Heart left ventricle (tissue), 16 donors: ENCODE measurements at regions of chr10 and their contacts with region 1.

Region 1: DNA sequence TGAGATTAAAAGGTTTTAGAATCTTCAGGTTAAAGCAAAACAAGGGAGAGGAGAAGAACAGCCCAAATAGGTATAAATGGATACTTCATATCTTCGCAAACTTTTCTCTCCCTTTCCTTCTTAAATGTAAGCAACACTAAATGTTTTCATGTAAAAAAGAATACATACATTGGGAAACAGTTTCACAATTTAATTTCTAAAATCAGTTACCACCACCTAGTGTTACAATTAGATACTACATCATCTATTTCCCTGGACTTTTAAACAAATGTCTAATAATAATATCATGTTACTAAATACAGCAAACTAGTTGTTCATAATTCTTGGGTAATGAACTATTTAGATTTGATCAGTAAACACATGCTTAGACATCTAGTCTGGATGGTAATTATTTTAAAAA is 35.8 kb downstream of the MINDY3 start:
- DNase-seq: no peak
- ATAC-seq: no peak
- H3K4me3 ChIP-seq: no peak overlapping the region
- H3K27ac ChIP-seq: no peak overlapping the region
- H3K4me1 ChIP-seq: peaks cover 0 to 9% (median 0%) of the 10 kb centered on the region in 12 donors
- H3K27me3 ChIP-seq: no peaks in the 10 kb centered on the region
- CTCF ChIP-seq: peak; percentile 31 to 72 (median 53)
- POLR2A ChIP-seq: no peak

Region 2: GRCh38 chr10:15439341-15439842 is 385.1 kb before region 1 on chr10:
- intact Hi-C with region 1: loop called in 9 of 10 experiments (anchors 2 to 10 kb)
- DNase-seq: peak; percentile 53 to 71 (median 59)
- ATAC-seq: peak; percentile 75 to 97 (median 92)
- H3K4me3 ChIP-seq: peak overlapping the region in 10 of 12 donors; percentile 21 to 51 (median 36)
- H3K27ac ChIP-seq: peak overlapping the region; percentile 26 to 80 (median 60)
- H3K4me1 ChIP-seq: peaks cover 0 to 16% (median 6%) of the 10 kb centered on the region in 12 donors
- H3K27me3 ChIP-seq: no peaks in the 10 kb centered on the region
- CTCF ChIP-seq: peak in 9 of 12 donors; percentile 7 to 60 (median 38)
- POLR2A ChIP-seq: peak in 1 of 2 donors; percentile 18

Region 3: GRCh38 chr10:15585303-15585715 is 239.2 kb before region 1 on chr10:
- intact Hi-C with region 1: loop called in 4 of 10 experiments (anchors 10 kb)
- DNase-seq: peak; percentile 41 to 72 (median 51)
- ATAC-seq: peak in 3 of 4 donors; percentile 61 to 82 (median 73)
- H3K4me3 ChIP-seq: no peak overlapping the region
- H3K27ac ChIP-seq: no peak overlapping the region
- H3K4me1 ChIP-seq: peaks cover 0 to 8% (median 0%) of the 10 kb centered on the region in 12 donors
- H3K27me3 ChIP-seq: no peaks in the 10 kb centered on the region
- CTCF ChIP-seq: peak; percentile 50 to 87 (median 76)
- POLR2A ChIP-seq: no peak

Region 4: DNA sequence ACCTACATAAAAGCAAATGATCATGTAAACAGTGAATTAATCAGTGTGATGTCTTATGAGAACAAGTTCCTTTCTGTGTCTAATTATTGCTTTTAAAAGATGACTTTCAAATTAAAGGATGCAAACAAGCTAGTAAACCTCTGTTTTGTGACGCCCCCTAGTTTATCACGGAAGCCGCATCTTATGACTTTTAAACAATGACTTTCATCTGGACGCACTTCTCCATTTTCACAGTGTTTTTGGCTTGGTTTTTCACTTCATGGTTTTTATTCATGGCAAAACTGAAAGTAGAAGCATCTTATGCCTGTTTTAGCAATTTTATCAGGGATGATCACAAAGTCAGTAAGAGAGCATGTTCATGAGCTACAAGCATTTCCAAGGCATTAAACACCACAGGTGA is 139.7 kb before region 1 on chr10:
- intact Hi-C with region 1: no loop called
- DNase-seq: no peak
- ATAC-seq: no peak
- H3K4me3 ChIP-seq: no peak overlapping the region
- H3K27ac ChIP-seq: no peak overlapping the region
- H3K4me1 ChIP-seq: no peaks in the 10 kb centered on the region
- H3K27me3 ChIP-seq: peaks cover 0 to 6% (median 0%) of the 10 kb centered on the region in 9 donors
- CTCF ChIP-seq: no peak
- POLR2A ChIP-seq: no peak

Region 5: DNA sequence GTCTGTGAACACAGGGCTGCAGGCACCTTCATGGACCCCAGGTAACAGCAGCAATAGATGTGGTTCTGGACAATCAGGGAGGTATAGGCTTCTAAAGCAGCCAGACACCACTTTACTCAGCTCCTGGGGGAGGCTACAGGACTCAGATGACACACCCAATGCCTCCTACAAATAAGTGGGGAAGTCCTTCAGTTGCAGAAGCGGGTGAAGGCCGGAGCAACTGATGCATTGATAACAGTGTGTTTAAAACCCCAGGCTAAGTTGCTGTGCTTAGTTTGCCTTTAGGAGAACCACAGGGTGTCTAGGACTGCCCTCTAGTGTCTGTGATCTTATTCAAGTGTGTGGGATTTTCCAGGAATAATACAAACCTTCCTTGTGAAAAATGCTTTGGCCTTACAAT is 98.9 kb before region 1 on chr10:
- intact Hi-C with region 1: loop called in 4 of 10 experiments (anchors 5 to 10 kb)
- DNase-seq: no peak
- ATAC-seq: peak in 3 of 4 donors; percentile 51 to 69 (median 68)
- H3K4me3 ChIP-seq: no peak overlapping the region
- H3K27ac ChIP-seq: no peak overlapping the region
- H3K4me1 ChIP-seq: peaks cover 0 to 10% (median 0%) of the 10 kb centered on the region in 12 donors
- H3K27me3 ChIP-seq: peaks cover 0 to 14% (median 0%) of the 10 kb centered on the region in 9 donors
- CTCF ChIP-seq: peak; percentile 25 to 69 (median 56)
- POLR2A ChIP-seq: no peak